HCT116 (cell line): ENCODE measurements at regions of chr5 and their contacts with region 1.

Region 1: GRCh38 chr5:138542956-138543729 is at the start of gene ETF1:
- DNase-seq: peak; percentile 97
- ATAC-seq: peak; percentile 88
- H3K4me3 ChIP-seq: peak within 1 kb of the TSS; percentile 84 to 97
- H3K27ac ChIP-seq: peak within 1 kb of the TSS; percentile 78
- H3K4me1 ChIP-seq: peaks cover 19 to 50% of the 10 kb centered on the region in 2 experiments; a peak in 3 of 4 replicates
- H3K27me3 ChIP-seq: no peaks in the 10 kb centered on the region
- CTCF ChIP-seq: no peak
- POLR2A ChIP-seq: peak; percentile 18
- RAD21 ChIP-seq: no peak
- total RNA-seq, gene ETF1: 178 TPM

Region 2: DNA sequence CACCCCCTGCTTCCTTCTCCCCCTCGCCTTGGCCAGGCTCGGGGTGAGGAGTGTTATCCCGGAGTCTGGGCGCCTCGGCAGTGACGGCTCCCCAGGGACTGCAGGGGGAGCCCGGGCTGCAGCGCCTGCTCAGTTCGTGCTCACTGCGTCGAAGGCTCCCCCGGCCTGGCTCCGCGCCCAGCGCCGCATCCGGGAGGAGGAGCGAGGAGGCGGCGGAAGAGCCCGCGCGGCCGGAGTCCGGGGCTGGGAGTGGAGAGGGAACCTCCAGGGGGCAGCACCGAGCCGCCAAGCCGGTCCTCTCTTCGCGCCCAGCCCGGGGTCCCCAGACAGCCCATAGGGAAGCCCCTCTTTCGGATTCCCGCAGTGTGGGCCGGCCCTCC is 79.1 kb before region 1 on chr5:
- CTCF ChIA-PET with region 1: interaction called, 8 read pairs
- POLR2A ChIA-PET with region 1: interaction called, 7 read pairs
- RAD21 ChIA-PET with region 1: no interaction called
- intact Hi-C with region 1: loop called (anchors 1 kb)
- DNase-seq: peak; percentile 81
- ATAC-seq: peak; percentile 52
- H3K4me3 ChIP-seq: peak overlapping the region; percentile 53 to 82
- H3K27ac ChIP-seq: peak overlapping the region; percentile 88
- H3K4me1 ChIP-seq: peaks cover 0 to 40% of the 10 kb centered on the region in 2 experiments; a peak in 3 of 4 replicates
- H3K27me3 ChIP-seq: no peaks in the 10 kb centered on the region
- CTCF ChIP-seq: peak in 2 of 3 experiments; percentile 77 to 83; a peak in 4 of 6 replicates
- POLR2A ChIP-seq: peak; percentile 33
- RAD21 ChIP-seq: no peak

Region 3: GRCh38 chr5:138789771-138790242 is 246.7 kb after region 1 on chr5:
- CTCF ChIA-PET with region 1: no interaction called
- POLR2A ChIA-PET with region 1: no interaction called
- RAD21 ChIA-PET with region 1: no interaction called
- intact Hi-C with region 1: no loop called
- DNase-seq: peak; percentile 37
- ATAC-seq: peak; percentile 94
- H3K4me3 ChIP-seq: no peak overlapping the region
- H3K27ac ChIP-seq: no peak overlapping the region
- H3K4me1 ChIP-seq: no peaks in the 10 kb centered on the region; a peak in 1 of 4 replicates
- H3K27me3 ChIP-seq: no peaks in the 10 kb centered on the region
- CTCF ChIP-seq: peak; percentile 30 to 72 (median 71); a peak in 5 of 6 replicates
- POLR2A ChIP-seq: no peak
- RAD21 ChIP-seq: peak; percentile 44